Calu3 (cell line): ENCODE measurements at regions of chr4 and their contacts with region 1.

Region 1: GRCh38 chr4:186144956-186145569 is 40.6 kb downstream of the FAM149A start:
- DNase-seq: peak; percentile 49
- H3K4me3 Mint-ChIP-seq: peak overlapping the region; percentile 77
- H3K27ac Mint-ChIP-seq: peak overlapping the region; percentile 87
- H3K4me1 Mint-ChIP-seq: peaks cover 25% of the 10 kb centered on the region
- H3K27me3 Mint-ChIP-seq: no peaks in the 10 kb centered on the region
- CTCF ChIP-seq: no peak

Region 2: GRCh38 chr4:186104890-186105646 is 40.0 kb before region 1 on chr4:
- CTCF ChIA-PET with region 1: no interaction called
- intact Hi-C with region 1: loop called (anchors 5 kb)
- DNase-seq: peak; percentile 39
- H3K4me3 Mint-ChIP-seq: peak overlapping the region; percentile 75
- H3K27ac Mint-ChIP-seq: peak overlapping the region; percentile 61
- H3K4me1 Mint-ChIP-seq: peaks cover 9% of the 10 kb centered on the region
- H3K27me3 Mint-ChIP-seq: no peaks in the 10 kb centered on the region
- CTCF ChIP-seq: no peak

Region 3: GRCh38 chr4:186118582-186118981 is 26.5 kb before region 1 on chr4:
- CTCF ChIA-PET with region 1: no interaction called
- intact Hi-C with region 1: no loop called
- DNase-seq: no peak
- H3K4me3 Mint-ChIP-seq: no peak overlapping the region
- H3K27ac Mint-ChIP-seq: no peak overlapping the region
- H3K4me1 Mint-ChIP-seq: no peaks in the 10 kb centered on the region
- H3K27me3 Mint-ChIP-seq: no peaks in the 10 kb centered on the region
- CTCF ChIP-seq: no peak

Region 4: GRCh38 chr4:186191200-186192065 is 46.4 kb after region 1 on chr4 and contains the start of gene CYP4V2:
- CTCF ChIA-PET with region 1: interaction called, 4 read pairs
- intact Hi-C with region 1: loop called (anchors 5 kb)
- DNase-seq: peak; percentile 86
- H3K4me3 Mint-ChIP-seq: peak within 1 kb of the TSS; percentile 86
- H3K27ac Mint-ChIP-seq: peak within 1 kb of the TSS; percentile 85
- H3K4me1 Mint-ChIP-seq: peaks cover 17% of the 10 kb centered on the region
- H3K27me3 Mint-ChIP-seq: no peaks in the 10 kb centered on the region
- CTCF ChIP-seq: no peak
- total RNA-seq, gene CYP4V2: 43.3 and 43.8 TPM in 2 replicates

Region 5: DNA sequence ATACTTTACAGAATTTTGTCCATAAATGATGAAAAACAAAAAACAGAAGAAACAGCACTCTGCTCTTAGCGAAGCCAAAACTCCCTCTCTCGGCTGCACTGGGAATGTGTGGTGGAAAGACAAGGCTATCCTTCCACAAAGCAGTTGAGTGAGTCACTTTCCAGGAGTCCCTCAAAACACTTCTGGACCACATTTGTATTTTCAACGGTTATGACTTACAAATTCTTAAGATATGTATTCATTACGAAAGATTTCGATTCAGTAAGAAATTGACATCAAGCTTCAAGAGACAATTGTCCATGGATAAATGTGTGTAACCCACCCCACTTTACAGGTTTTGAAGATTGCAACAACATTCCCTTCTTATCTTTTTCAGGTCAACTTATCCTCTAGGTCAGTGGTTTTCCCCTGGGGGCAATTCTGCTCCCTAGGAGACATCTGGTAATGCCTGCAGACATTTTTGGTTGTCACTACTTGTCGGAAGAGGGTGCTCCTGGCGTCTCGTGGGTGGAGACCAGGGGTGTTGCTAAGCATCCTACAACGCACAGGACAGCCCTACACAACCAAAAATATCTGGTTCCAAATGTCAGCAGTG is 477.0 kb after region 1 on chr4:
- CTCF ChIA-PET with region 1: no interaction called
- intact Hi-C with region 1: no loop called
- DNase-seq: no peak
- H3K4me3 Mint-ChIP-seq: no peak overlapping the region
- H3K27ac Mint-ChIP-seq: no peak overlapping the region
- H3K4me1 Mint-ChIP-seq: peaks cover 13% of the 10 kb centered on the region
- H3K27me3 Mint-ChIP-seq: no peaks in the 10 kb centered on the region
- CTCF ChIP-seq: no peak